ENCODE measurements at regions of chr22 and their contacts with region 1.

Region 1: DNA sequence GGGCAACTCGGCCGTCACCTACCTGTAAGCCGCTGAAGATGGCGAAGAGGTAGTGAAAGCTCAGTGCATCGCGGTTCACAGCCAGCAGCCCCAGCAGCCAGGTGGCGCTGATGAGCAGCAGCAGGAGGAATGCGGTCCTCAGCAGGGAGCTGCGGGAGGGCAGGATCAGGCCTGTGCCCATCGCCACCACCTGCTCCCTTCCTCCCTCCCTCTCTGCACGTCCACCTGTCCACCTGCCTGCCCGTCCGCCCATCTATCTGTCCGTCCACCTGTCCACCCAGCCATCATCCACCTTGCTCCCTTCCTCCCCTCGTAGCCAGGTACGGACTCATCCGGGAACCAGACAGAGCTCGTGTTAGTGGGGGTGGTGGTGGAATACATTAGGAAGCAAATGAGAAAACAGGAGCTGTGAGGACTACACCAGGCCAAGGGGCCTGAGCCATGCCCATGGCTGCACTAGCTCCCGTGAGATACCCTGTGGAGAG is 32.2 kb downstream of the TRMU start:
- DNase-seq: peak; percentile 90
- CTCF ChIP-seq: peak; percentile 99

Region 2: GRCh38 chr22:46386312-46386711 is 18.6 kb after region 1 on chr22:
- CTCF ChIA-PET with region 1: interaction called, 10 read pairs
- POLR2A ChIA-PET with region 1: no interaction called
- DNase-seq: no peak
- CTCF ChIP-seq: no peak

Region 3: GRCh38 chr22:46533434-46533833 is 165.7 kb after region 1 on chr22:
- CTCF ChIA-PET with region 1: interaction called, 10 read pairs
- POLR2A ChIA-PET with region 1: no interaction called
- DNase-seq: no peak
- CTCF ChIP-seq: no peak

Region 4: GRCh38 chr22:46547883-46548244 is 180.1 kb after region 1 on chr22:
- CTCF ChIA-PET with region 1: interaction called, 111 read pairs
- POLR2A ChIA-PET with region 1: no interaction called
- DNase-seq: no peak
- CTCF ChIP-seq: no peak